ENCODE measurements at regions of chr6 and their contacts with region 1.

Region 1: GRCh38 chr6:110389689-110390382 is 25.5 kb downstream of the DDO start:
- DNase-seq: no peak
- ATAC-seq: peak in 3 of 4 donors; percentile 7 to 57 (median 29)
- H3K4me3 ChIP-seq: no peak overlapping the region
- H3K27ac ChIP-seq: peak overlapping the region in 1 of 12 donors; percentile 12
- H3K4me1 ChIP-seq: peaks cover 0 to 13% (median 5%) of the 10 kb centered on the region in 12 donors
- H3K27me3 ChIP-seq: no peaks in the 10 kb centered on the region
- CTCF ChIP-seq: no peak
- POLR2A ChIP-seq: no peak

Region 2: GRCh38 chr6:109743739-109744138 is 646.1 kb before region 1 on chr6:
- intact Hi-C with region 1: no loop called
- DNase-seq: no peak
- ATAC-seq: no peak
- H3K4me3 ChIP-seq: no peak overlapping the region
- H3K27ac ChIP-seq: no peak overlapping the region
- H3K4me1 ChIP-seq: peaks cover 0 to 7% (median 0%) of the 10 kb centered on the region in 12 donors
- H3K27me3 ChIP-seq: no peaks in the 10 kb centered on the region
- CTCF ChIP-seq: no peak
- POLR2A ChIP-seq: no peak

Region 3: DNA sequence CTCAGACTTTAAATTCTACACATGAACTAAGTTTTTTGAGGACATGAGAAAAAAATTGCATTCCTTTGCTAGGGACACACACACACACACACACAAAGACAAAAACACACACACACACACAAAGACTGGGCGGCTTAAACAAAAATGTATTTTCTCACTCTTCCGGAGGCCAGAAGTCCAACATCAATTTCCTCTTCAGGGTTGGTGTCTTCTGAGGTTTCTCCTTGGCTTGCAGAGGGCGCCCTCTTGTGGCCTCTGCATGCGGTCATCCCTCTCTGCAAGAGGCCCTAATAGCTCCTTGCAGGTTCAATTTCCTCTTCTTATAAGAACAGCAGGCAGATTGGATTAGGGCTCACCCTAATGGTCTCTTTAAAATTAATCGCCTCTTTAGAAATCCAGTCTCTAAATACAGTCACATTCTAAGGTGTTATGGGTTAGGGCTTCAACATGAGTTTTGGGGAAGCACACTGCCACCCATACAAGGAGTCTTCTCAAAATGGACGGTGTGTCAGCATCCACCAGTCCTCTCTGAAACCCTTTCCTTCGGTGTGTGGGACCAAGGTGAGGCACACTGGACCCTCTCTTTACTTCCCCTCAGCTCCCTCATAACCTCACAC is 350.4 kb before region 1 on chr6:
- intact Hi-C with region 1: loop called in 4 of 10 experiments (anchors 5 to 10 kb)
- DNase-seq: peak; percentile 75 to 90 (median 82)
- ATAC-seq: peak; percentile 79 to 94 (median 91)
- H3K4me3 ChIP-seq: peak overlapping the region in 10 of 12 donors; percentile 11 to 47 (median 31)
- H3K27ac ChIP-seq: peak overlapping the region in 1 of 12 donors; percentile 59
- H3K4me1 ChIP-seq: peaks cover 0 to 11% (median 0%) of the 10 kb centered on the region in 12 donors
- H3K27me3 ChIP-seq: no peaks in the 10 kb centered on the region
- CTCF ChIP-seq: peak; percentile 81 to 95 (median 88)
- POLR2A ChIP-seq: no peak

Region 4: GRCh38 chr6:110053395-110054240 is 336.2 kb before region 1 on chr6:
- intact Hi-C with region 1: loop called in 7 of 10 experiments (anchors 5 to 10 kb)
- DNase-seq: peak in 1 of 5 donors; percentile 19
- ATAC-seq: peak in 3 of 4 donors; percentile 44 to 72 (median 59)
- H3K4me3 ChIP-seq: no peak overlapping the region
- H3K27ac ChIP-seq: no peak overlapping the region
- H3K4me1 ChIP-seq: peaks cover 0 to 3% (median 0%) of the 10 kb centered on the region in 12 donors
- H3K27me3 ChIP-seq: peaks cover 0 to 4% (median 0%) of the 10 kb centered on the region in 9 donors
- CTCF ChIP-seq: peak; percentile 47 to 82 (median 71)
- POLR2A ChIP-seq: no peak

Region 5: DNA sequence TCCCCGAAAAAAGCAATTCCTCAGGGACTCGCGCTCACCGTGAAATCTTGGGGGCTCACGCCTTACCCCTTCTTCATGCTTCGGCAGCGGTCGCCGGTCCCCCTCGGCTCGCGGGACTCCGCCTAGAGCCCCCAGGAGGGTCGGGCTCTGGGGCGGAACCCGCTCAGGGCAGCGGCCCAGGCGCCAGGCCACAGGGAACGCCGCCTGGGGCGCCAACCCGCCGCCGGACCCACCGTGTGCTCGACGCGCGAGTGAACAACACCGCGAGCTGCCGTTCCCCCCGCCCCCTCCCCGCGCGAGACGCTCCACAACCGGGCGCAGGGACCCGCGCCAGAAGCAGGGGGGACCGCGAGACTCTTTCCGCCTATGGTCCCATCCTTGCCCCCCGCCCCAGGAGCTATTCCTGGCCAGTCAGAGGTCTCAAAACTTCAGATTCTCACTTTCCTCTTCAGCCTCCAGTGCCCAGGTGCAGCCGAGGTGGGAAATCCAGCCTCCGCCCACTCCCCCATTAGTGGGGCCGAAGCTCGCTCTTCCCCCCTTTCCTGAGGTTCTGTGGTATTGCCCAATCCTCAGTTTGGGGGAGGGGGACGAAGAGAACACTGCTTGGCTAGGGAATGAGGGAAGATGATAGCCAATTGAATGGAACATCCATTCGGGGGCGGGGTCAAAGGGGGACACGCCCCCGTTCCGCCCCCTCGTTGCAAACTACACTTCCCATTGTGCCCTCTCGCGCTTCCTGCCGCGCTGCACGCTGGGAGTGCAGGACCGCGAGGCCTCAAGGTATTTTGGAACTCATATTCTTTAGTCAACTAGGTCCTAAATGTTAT is 210.2 kb before region 1 on chr6 and contains the start of gene WASF1:
- intact Hi-C with region 1: loop called (anchors 2 to 5 kb)
- DNase-seq: peak; percentile 90 to 96 (median 94)
- ATAC-seq: peak; percentile 99 to 100 (median 100)
- H3K4me3 ChIP-seq: peak within 1 kb of the TSS; percentile 66 to 97 (median 82)
- H3K27ac ChIP-seq: peak within 1 kb of the TSS; percentile 46 to 92 (median 78)
- H3K4me1 ChIP-seq: peaks cover 5 to 43% (median 33%) of the 10 kb centered on the region in 12 donors
- H3K27me3 ChIP-seq: no peaks in the 10 kb centered on the region
- CTCF ChIP-seq: no peak
- POLR2A ChIP-seq: peak in 1 of 2 donors; percentile 25
- total RNA-seq, gene WASF1: 0.54 to 4.2 (median 1.3) TPM

Region 6: GRCh38 chr6:110671116-110671846 is 281.4 kb after region 1 on chr6:
- intact Hi-C with region 1: no loop called
- DNase-seq: no peak
- ATAC-seq: no peak
- H3K4me3 ChIP-seq: no peak overlapping the region
- H3K27ac ChIP-seq: no peak overlapping the region
- H3K4me1 ChIP-seq: peaks cover 0 to 12% (median 0%) of the 10 kb centered on the region in 12 donors
- H3K27me3 ChIP-seq: no peaks in the 10 kb centered on the region
- CTCF ChIP-seq: no peak
- POLR2A ChIP-seq: no peak